ENCODE measurements at regions of chr2 and their contacts with region 1.

Region 1: GRCh38 chr2:37851828-37852584 is 73.1 kb upstream of the RMDN2 start:
- DNase-seq: no peak
- H3K4me3 ChIP-seq: no peak overlapping the region
- H3K27ac ChIP-seq: peak overlapping the region in 1 of 2 experiments; percentile 80; a peak in 3 of 4 replicates
- H3K4me1 ChIP-seq: peaks cover 14 to 47% of the 10 kb centered on the region in 2 experiments; a peak in 3 of 4 replicates
- H3K27me3 ChIP-seq: no peaks in the 10 kb centered on the region
- CTCF ChIP-seq: no peak
- EP300 ChIP-seq: no peak
- RAD21 ChIP-seq: no peak

Region 2: GRCh38 chr2:37672104-37672869 is 179.7 kb before region 1 on chr2:
- CTCF ChIA-PET with region 1: interaction called, 3 read pairs
- POLR2A ChIA-PET with region 1: interaction called, 56 read pairs
- DNase-seq: peak; percentile 98
- H3K4me3 ChIP-seq: peak overlapping the region; percentile 80 to 100
- H3K27ac ChIP-seq: peak overlapping the region; percentile 86 to 99
- H3K4me1 ChIP-seq: peaks cover 21 to 26% of the 10 kb centered on the region in 2 experiments
- H3K27me3 ChIP-seq: no peaks in the 10 kb centered on the region
- CTCF ChIP-seq: peak; percentile 10; the same call in 1 of the 2 replicates
- EP300 ChIP-seq: peak in 1 of 2 experiments; percentile 58; a peak in 2 of 4 replicates
- RAD21 ChIP-seq: peak; percentile 42

Region 3: DNA sequence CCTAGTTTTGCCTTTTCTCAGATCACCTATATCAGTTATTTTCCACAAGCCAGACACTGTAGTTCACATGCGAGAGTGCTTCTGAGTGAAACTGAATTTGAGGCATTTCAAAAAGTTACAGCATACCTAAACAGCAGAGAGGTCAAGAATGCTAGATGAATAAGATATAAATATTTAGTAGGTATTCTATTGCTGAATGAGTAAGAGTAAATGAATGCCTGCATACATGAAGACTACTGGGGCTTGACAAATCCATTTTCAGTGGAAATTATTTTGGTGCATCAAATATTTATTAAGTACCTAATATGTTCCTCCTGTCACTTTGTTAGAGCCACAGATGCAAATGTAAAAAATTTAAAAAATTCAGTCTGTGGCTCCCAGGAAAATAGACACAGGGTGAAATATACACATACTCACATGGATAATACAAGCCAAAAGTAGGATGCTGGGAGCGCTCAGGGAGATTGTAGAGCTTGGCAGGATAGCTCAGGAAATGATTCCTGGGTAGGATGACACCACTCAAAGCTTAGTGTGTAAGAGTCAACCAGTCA is 153.0 kb before region 1 on chr2:
- CTCF ChIA-PET with region 1: no interaction called
- POLR2A ChIA-PET with region 1: no interaction called
- DNase-seq: no peak
- H3K4me3 ChIP-seq: no peak overlapping the region
- H3K27ac ChIP-seq: peak overlapping the region; percentile 74 to 76; a peak in 3 of 4 replicates
- H3K4me1 ChIP-seq: peaks cover 4 to 18% of the 10 kb centered on the region in 2 experiments
- H3K27me3 ChIP-seq: no peaks in the 10 kb centered on the region
- CTCF ChIP-seq: no peak
- EP300 ChIP-seq: peak; percentile 6 to 70; a peak in 1 of 4 replicates
- RAD21 ChIP-seq: no peak

Region 4: DNA sequence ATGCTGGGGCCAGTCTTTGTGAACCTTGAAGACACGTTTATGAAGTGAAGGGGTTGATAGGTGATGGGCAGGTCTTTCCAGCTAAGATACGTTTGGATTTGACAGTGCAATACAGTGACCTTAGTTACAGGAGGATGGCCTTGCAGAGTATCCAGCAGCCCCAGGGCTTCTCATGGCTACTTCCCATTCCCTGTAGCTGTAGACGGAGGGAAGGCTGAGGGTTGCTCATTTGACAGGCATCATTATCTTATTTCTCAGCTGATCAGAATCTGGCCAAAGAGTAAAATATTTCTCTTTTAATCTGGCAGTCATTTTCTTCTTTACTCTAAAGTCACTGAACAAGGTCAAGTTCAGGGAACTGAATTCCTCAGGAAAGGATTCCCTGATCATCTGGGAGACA is 12.0 kb before region 1 on chr2:
- CTCF ChIA-PET with region 1: interaction called, 10 read pairs
- POLR2A ChIA-PET with region 1: interaction called, 7 read pairs
- DNase-seq: no peak
- H3K4me3 ChIP-seq: no peak overlapping the region
- H3K27ac ChIP-seq: no peak overlapping the region
- H3K4me1 ChIP-seq: peaks cover 0 to 16% of the 10 kb centered on the region in 2 experiments; a peak in 3 of 4 replicates
- H3K27me3 ChIP-seq: no peaks in the 10 kb centered on the region
- CTCF ChIP-seq: no peak
- EP300 ChIP-seq: no peak
- RAD21 ChIP-seq: no peak

Measured in SK-N-SH (cell line).